BJ (cell line): ENCODE measurements at regions of chrX and their contacts with region 1.

Region 1: DNA sequence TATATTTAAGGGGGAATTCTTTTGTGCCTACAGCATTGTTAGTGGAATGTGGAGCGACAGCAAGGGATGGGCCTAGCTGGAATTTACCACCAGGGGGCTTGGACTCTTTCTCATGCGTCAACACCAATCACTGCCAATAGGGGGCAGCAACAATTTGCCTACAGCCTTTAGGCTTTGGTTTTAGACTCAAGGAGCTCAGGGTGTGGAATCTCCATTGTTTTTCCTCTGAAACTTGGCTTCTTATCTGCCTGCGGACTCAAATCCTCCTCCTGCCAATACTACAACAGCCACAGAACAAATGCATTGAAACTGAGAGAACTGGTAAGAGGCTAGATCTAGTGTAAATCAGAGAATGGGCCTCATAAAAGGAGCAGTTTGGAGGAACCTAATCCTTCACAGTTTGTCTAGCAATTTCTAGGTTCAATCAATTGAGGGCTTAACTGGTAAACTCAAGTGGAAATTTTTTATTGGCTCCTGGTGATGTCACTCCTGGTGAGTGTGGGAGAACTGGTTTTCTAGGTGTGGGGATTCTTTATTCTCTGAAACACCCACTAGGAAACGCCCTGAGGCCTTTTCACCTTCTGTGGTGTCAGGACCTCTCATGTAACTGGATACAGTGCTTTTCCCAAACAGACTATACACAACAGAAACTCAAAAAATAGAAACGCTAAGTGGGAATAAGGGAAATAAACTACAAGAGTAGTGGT is 27.9 kb upstream of the TMSB4X start:
- DNase-seq: no peak
- H3K4me3 ChIP-seq: no peak overlapping the region
- H3K27me3 ChIP-seq: no peaks in the 10 kb centered on the region
- CTCF ChIP-seq: peak; percentile 81

Region 2: GRCh38 chrX:12721042-12721441 is 225.9 kb before region 1 on chrX:
- CTCF ChIA-PET with region 1: no interaction called
- POLR2A ChIA-PET with region 1: no interaction called
- DNase-seq: no peak
- H3K4me3 ChIP-seq: no peak overlapping the region
- H3K27me3 ChIP-seq: no peaks in the 10 kb centered on the region
- CTCF ChIP-seq: no peak

Region 3: GRCh38 chrX:13000301-13000811 is 53.4 kb after region 1 on chrX:
- CTCF ChIA-PET with region 1: no interaction called
- POLR2A ChIA-PET with region 1: no interaction called
- DNase-seq: no peak
- H3K4me3 ChIP-seq: no peak overlapping the region
- H3K27me3 ChIP-seq: no peaks in the 10 kb centered on the region
- CTCF ChIP-seq: no peak

Region 4: DNA sequence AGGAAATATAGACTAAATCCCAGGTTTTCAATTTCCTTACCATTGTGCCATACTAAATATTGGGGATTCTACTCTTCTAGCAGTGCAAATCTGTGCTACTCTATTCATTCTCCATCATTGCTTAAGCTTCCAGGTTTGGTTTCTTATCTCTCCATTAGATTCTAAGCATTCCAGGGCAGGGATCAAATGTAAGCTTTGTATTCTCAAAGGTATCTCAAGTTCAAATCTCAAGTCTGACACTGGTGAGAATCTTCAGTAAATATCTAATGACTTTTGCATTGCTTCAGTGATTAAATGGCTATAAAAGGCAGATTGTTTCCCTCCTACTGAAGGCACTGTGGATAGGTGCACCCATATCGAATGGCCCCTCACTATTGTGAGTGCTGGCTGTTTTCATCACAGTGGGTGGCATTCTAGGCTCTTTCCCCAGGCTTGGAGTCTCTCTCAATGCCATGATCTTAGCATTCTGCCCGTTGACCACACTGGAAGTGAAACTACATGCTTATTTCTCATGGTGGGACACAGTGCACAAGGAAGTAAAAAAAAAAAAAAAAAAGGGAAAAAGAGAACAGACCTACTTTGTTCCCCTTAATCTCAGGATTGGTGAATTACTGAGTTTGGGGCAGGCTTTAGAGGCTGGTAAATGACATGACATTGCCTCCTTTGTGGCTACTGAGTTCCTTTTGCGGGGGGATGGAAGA is 68.7 kb after region 1 on chrX:
- CTCF ChIA-PET with region 1: no interaction called
- POLR2A ChIA-PET with region 1: no interaction called
- DNase-seq: no peak
- H3K4me3 ChIP-seq: no peak overlapping the region
- H3K27me3 ChIP-seq: no peaks in the 10 kb centered on the region
- CTCF ChIP-seq: no peak

Region 5: DNA sequence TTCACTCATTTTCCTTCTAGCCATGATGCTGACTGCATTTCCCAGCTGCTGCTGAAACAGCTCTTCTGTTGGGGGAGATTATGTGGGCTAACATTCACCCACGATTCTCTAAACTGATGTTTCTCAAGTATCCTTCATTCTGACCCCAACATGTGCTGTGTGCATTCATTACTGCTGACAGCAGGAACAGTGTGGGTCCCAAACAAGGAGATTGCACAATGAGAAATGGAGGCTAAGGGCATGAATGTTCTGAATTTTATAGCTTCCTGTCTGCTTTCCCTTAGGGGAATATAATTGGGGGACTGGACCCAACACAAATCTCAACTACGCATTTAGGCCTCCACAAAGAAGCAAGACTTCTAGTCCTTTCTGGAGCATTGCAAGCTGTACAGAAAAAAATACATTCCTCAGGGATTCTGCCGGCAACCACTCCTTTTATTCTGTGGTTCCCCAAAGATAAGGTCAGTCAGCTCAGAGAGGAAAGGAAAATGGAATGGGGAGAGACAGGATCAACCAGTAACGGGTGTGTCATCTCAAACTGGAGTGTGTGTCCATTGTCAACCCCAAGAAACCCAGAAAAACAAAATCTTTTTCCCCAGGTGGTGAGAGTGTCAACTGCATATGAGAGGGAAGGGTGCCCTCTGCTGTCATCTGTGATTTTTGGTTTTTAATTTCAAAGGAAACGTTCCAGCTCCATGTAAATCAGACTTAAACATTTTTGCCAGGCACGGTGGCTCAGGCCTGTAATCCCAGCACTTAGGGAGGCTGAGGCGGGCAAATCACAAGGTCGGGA is 540.9 kb after region 1 on chrX:
- CTCF ChIA-PET with region 1: interaction called, 24 read pairs
- POLR2A ChIA-PET with region 1: no interaction called
- DNase-seq: peak; percentile 70
- H3K4me3 ChIP-seq: no peak overlapping the region
- H3K27me3 ChIP-seq: no peaks in the 10 kb centered on the region
- CTCF ChIP-seq: peak; percentile 37